Esophagus muscularis mucosa (tissue), 4 donors: ENCODE measurements at regions of chr3 and their contacts with region 1.

Region 1: DNA sequence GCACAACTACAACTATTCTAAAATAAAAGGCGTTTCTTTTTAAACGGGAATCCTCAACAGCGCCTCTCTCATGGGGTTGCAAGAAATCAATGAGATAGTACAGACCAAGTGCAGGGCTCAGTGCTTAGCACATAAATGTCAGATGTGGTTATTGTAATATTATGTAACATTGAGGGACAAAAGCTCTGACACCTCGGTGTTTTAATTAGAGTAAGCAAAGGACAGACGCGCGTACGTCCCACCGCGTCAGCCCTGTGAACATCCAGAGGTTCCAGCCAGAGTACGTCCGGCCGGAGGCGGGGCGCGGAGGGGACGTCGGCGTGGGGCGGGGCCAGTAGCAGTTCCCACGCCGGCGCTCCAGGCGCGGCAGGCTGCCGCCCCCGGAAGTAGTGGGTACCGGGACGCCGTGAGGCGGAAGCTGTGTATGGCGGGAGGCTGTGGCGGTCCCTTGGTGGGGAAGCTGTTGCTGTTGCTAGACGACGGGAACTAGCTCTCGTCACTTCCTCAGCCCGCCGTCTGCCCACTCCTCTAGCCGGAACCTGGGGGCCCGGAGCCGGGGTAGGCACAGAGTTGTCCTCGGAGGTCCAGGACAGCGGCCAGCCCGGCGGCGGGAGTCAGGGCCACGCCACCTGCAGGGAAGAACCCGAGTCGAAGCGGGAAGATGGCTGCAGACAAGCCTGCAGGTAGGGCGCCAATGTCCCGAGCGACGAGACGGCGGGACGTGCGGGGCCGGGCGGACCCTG is at the start of gene CNOT10:
- DNase-seq: peak; percentile 96
- H3K4me3 ChIP-seq: peak within 1 kb of the TSS; percentile 76 to 91 (median 80)
- H3K27ac ChIP-seq: peak within 1 kb of the TSS; percentile 83 to 92 (median 85)
- H3K4me1 ChIP-seq: peaks cover 17 to 30% (median 27%) of the 10 kb centered on the region in 4 donors
- H3K27me3 ChIP-seq: no peaks in the 10 kb centered on the region
- CTCF ChIP-seq: peak in 1 of 3 experiments; percentile 5
- EP300 ChIP-seq: no peak
- POLR2A ChIP-seq: no peak
- total RNA-seq, gene CNOT10: 10.8 to 16.8 (median 15.4) TPM

Region 2: GRCh38 chr3:32391643-32392535 is 293.1 kb before region 1 on chr3 and contains the start of gene CMTM7:
- intact Hi-C with region 1: loop called (anchors 10 kb)
- DNase-seq: no peak
- H3K4me3 ChIP-seq: peak within 1 kb of the TSS; percentile 72 to 86 (median 77)
- H3K27ac ChIP-seq: peak within 1 kb of the TSS; percentile 74 to 87 (median 78)
- H3K4me1 ChIP-seq: peaks cover 8 to 22% (median 16%) of the 10 kb centered on the region in 4 donors
- H3K27me3 ChIP-seq: no peaks in the 10 kb centered on the region
- CTCF ChIP-seq: no peak
- EP300 ChIP-seq: no peak
- POLR2A ChIP-seq: no peak
- total RNA-seq, gene CMTM7: 8.2 to 10.8 (median 8.5) TPM

Region 3: GRCh38 chr3:32709346-32709745 is 24.4 kb after region 1 on chr3:
- intact Hi-C with region 1: no loop called
- DNase-seq: no peak
- H3K4me3 ChIP-seq: no peak overlapping the region
- H3K27ac ChIP-seq: no peak overlapping the region
- H3K4me1 ChIP-seq: peaks cover 0 to 14% (median 7%) of the 10 kb centered on the region in 4 donors
- H3K27me3 ChIP-seq: no peaks in the 10 kb centered on the region
- CTCF ChIP-seq: no peak
- EP300 ChIP-seq: no peak
- POLR2A ChIP-seq: no peak

Region 4: DNA sequence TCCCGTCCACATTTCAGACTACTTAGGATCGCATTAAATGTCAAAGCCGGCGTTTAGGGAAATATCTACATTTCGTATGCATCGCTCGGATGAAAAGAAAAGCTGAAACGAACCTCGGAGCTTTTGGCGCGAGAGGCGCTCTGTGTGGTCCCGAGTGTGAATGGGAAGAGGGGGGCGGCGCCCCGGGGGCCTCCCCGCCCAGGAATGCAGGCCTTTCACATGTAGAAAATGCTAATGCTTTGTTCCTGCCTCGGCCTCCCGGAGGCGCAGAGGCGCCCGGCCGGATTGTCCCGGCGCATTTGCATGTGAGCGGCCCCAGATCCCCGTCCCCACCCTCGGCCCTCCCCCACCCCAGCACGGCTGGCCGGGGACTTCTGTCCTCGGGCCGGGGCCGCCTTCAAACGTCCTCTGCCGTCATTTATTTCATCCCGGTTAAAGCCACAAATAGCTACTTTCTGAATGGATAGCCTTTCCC is 95.8 kb after region 1 on chr3:
- intact Hi-C with region 1: no loop called
- DNase-seq: no peak
- H3K4me3 ChIP-seq: peak overlapping the region; percentile 55 to 62 (median 60)
- H3K27ac ChIP-seq: no peak overlapping the region
- H3K4me1 ChIP-seq: peaks cover 7 to 15% (median 15%) of the 10 kb centered on the region in 4 donors
- H3K27me3 ChIP-seq: peaks cover 0 to 11% (median 0%) of the 10 kb centered on the region in 4 donors
- CTCF ChIP-seq: no peak
- EP300 ChIP-seq: no peak
- POLR2A ChIP-seq: no peak